ENCODE measurements at regions of chr17 and their contacts with region 1.

Region 1: DNA sequence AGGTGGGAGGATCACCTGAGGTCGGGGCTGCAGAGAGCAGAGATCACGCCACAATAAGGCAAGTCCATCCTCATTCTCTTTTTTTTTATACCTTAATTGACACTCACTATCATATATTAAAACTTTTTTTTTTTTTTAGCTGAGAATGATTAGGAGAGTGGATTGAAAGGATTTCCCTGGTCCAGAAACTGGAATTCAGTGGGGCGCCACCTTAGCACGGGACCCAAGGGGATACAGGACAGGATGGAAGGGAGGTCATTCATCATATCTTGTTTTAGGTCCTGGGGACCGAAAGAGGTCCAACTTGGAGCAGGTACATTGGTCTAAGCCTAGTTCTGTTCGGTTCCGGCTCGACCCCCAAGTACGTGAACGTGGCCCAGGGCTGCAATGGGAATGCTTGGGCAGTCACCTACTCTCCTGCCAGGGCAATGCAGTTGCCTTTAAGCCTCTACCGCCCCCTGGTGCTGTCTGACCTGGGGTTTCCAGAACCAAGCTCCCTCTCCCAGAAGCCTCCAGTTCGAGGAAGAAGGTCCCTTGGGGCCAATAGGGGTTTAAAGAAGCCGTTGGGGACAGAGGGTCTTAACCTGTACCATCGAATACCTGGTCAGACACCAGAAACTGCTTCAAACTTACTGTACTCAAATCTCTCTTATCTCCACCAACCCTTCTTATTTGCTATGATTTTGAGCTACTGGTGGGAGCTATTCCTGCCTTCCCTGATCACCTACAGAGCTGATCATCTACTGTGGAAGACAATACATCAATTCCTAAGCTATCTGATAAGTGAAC is 19.9 kb upstream of the GPATCH8 start:
- DNase-seq: peak; percentile 87
- ATAC-seq: peak; percentile 81
- H3K4me3 Mint-ChIP-seq: no peak overlapping the region
- H3K27ac Mint-ChIP-seq: no peak overlapping the region
- H3K4me1 Mint-ChIP-seq: no peaks in the 10 kb centered on the region
- H3K27me3 Mint-ChIP-seq: peaks cover 9% of the 10 kb centered on the region

Region 2: GRCh38 chr17:44400226-44400847 is 122.7 kb before region 1 on chr17:
- CTCF ChIA-PET with region 1: interaction called, 10 read pairs
- POLR2A ChIA-PET with region 1: no interaction called
- intact Hi-C with region 1: loop called in 1 of 2 experiments (anchors 1 kb)
- DNase-seq: no peak
- ATAC-seq: peak; percentile 45
- H3K4me3 Mint-ChIP-seq: no peak overlapping the region
- H3K27ac Mint-ChIP-seq: no peak overlapping the region
- H3K4me1 Mint-ChIP-seq: peaks cover 13% of the 10 kb centered on the region
- H3K27me3 Mint-ChIP-seq: no peaks in the 10 kb centered on the region

Measured in activated CD4-positive, alpha-beta T cell treated with anti-CD3 and anti-CD28 coated beads for 36 hours (primary cell).